ENCODE measurements at regions of chr12 and their contacts with region 1.

Region 1: GRCh38 chr12:109093022-109093918 is at the start of gene ALKBH2:
- DNase-seq: peak; percentile 90
- ATAC-seq: peak; percentile 68
- H3K4me3 Mint-ChIP-seq: peak within 1 kb of the TSS; percentile 88
- H3K27ac Mint-ChIP-seq: peak within 1 kb of the TSS; percentile 92
- H3K4me1 Mint-ChIP-seq: peaks cover 33% of the 10 kb centered on the region
- H3K27me3 Mint-ChIP-seq: no peaks in the 10 kb centered on the region
- CTCF ChIP-seq: peak; percentile 92
- total RNA-seq, gene ALKBH2: 21.3 and 24.1 TPM in 2 replicates

Region 2: DNA sequence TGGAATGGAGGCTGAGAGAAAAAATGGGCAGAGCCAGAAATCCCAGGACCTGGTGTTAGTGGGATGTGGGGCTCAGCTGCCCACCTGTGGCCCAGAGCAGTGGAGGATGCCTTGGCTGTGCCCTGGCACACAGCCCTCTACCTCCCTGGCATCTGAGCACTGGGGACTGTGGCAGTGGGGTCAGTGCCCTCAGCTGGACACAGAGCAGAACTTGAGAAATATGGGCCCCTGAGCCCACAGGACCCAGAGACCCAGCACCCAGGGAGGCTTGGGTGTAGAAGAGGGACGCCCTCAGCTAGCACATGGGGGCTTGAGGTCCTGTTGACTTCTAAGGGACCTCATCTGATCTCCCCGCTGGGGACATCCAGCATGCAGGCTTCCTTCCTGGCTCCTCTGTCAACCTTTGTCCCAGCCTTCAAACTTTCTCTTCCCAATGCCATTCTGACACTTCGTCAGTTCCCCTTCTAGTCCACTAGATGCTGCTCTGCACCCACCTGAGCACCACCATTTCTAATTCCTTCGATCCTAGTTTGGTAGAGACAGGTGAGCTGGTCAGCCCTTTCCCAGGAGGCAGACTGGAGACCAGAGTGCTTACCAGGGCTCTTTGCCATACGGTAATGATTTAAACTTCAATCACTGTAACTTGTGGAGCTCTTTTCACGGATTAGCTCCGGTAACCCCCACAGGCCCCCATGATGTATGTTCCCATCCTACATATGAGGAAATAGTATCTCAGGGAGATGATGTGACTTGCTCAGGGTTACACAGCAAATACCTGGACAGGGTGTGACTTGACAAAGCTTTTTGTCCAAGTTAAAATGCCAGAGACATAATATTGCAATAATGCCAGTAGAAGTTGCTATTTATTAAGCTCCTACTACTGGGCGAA is 1175.1 kb before region 1 on chr12:
- CTCF ChIA-PET with region 1: no interaction called
- POLR2A ChIA-PET with region 1: no interaction called
- intact Hi-C with region 1: loop called (anchors 2 kb)
- DNase-seq: no peak
- ATAC-seq: no peak
- H3K4me3 Mint-ChIP-seq: no peak overlapping the region
- H3K27ac Mint-ChIP-seq: no peak overlapping the region
- H3K4me1 Mint-ChIP-seq: peaks cover 2% of the 10 kb centered on the region
- H3K27me3 Mint-ChIP-seq: peaks cover 48% of the 10 kb centered on the region
- CTCF ChIP-seq: no peak

Region 3: GRCh38 chr12:108664338-108665258 is 428.7 kb before region 1 on chr12:
- CTCF ChIA-PET with region 1: interaction called, 6 read pairs
- POLR2A ChIA-PET with region 1: no interaction called
- intact Hi-C with region 1: loop called (anchors 1 kb)
- DNase-seq: peak; percentile 33
- ATAC-seq: peak; percentile 97
- H3K4me3 Mint-ChIP-seq: peak overlapping the region; percentile 36
- H3K27ac Mint-ChIP-seq: peak overlapping the region; percentile 85
- H3K4me1 Mint-ChIP-seq: peaks cover 57% of the 10 kb centered on the region
- H3K27me3 Mint-ChIP-seq: no peaks in the 10 kb centered on the region
- CTCF ChIP-seq: peak; percentile 61

Region 4: DNA sequence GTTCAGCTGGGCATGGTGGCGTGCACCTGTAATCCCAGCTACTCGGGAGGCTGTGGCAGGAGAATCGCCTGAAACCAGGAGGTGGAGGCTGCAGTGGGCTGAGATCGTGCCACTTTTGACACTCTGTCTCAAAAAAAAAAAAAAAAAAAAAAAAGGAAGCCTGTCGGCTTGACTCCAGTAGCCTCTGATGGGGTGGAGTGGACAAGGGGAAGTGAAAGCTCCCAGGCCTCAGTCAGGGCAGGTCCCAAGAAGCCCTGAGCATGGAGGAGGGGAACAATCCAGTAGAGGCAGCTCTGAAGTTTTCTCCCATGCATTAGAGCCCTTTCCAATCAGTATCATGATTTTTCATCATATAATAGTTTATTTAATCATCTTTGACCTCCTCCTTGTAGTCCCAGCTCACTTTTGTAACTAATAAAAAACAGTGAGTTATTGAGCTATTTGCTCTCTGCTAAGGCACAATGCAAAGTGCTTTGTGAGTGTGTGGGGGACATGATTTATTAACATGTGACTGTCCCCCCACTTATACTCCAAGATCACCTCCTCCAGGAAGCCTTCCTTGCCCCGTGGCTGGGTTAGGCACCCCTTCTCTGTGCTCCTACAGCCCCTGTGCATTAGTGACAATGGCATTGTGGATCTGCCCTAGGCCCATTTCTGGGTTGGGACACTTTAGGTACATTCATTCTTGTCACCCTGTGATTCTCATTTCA is 231.2 kb before region 1 on chr12:
- CTCF ChIA-PET with region 1: no interaction called
- POLR2A ChIA-PET with region 1: no interaction called
- intact Hi-C with region 1: loop called (anchors 5 kb)
- DNase-seq: peak; percentile 44
- ATAC-seq: peak; percentile 47
- H3K4me3 Mint-ChIP-seq: no peak overlapping the region
- H3K27ac Mint-ChIP-seq: peak overlapping the region; percentile 27
- H3K4me1 Mint-ChIP-seq: peaks cover 42% of the 10 kb centered on the region
- H3K27me3 Mint-ChIP-seq: no peaks in the 10 kb centered on the region
- CTCF ChIP-seq: no peak

Region 5: GRCh38 chr12:109052414-109053323 is 40.6 kb before region 1 on chr12 and contains the start of gene USP30:
- CTCF ChIA-PET with region 1: no interaction called
- POLR2A ChIA-PET with region 1: interaction called, 8 read pairs
- intact Hi-C with region 1: loop called (anchors 1 kb)
- DNase-seq: peak; percentile 80
- ATAC-seq: peak; percentile 85
- H3K4me3 Mint-ChIP-seq: peak within 1 kb of the TSS; percentile 85
- H3K27ac Mint-ChIP-seq: peak within 1 kb of the TSS; percentile 86
- H3K4me1 Mint-ChIP-seq: peaks cover 22% of the 10 kb centered on the region
- H3K27me3 Mint-ChIP-seq: no peaks in the 10 kb centered on the region
- CTCF ChIP-seq: no peak
- total RNA-seq, gene USP30: 17.4 and 17.7 TPM in 2 replicates

Region 6: GRCh38 chr12:109573029-109573913 is 480.0 kb after region 1 on chr12 and contains the starts of genes MMAB and MVK:
- CTCF ChIA-PET with region 1: no interaction called
- POLR2A ChIA-PET with region 1: no interaction called
- intact Hi-C with region 1: loop called (anchors 2 kb)
- DNase-seq: peak; percentile 92
- ATAC-seq: peak; percentile 94
- H3K4me3 Mint-ChIP-seq: peak within 1 kb of the TSS; percentile 93
- H3K27ac Mint-ChIP-seq: peak within 1 kb of the TSS; percentile 90
- H3K4me1 Mint-ChIP-seq: peaks cover 25% of the 10 kb centered on the region
- H3K27me3 Mint-ChIP-seq: no peaks in the 10 kb centered on the region
- CTCF ChIP-seq: no peak
- total RNA-seq, gene MMAB: 62.8 and 63.3 TPM in 2 replicates
- total RNA-seq, gene MVK: 28.5 and 30.3 TPM in 2 replicates

Measured in activated B cell treated with CpG ODN at 0.5 μM for 24 hours (primary cell).